Activated CD4-positive, alpha-beta memory T cell treated with anti-CD3 and anti-CD28 coated beads, Interleukin-2, amount 10 ng/mL, durations not matched to agents 7 days and 5 days (primary cell): ENCODE measurements at regions of chr12 and their contacts with region 1.

Region 1: GRCh38 chr12:54579696-54580333 is 8.6 kb downstream of the PPP1R1A start:
- DNase-seq: peak; percentile 83
- H3K4me3 Mint-ChIP-seq: no peak overlapping the region
- H3K27ac Mint-ChIP-seq: no peak overlapping the region
- H3K4me1 Mint-ChIP-seq: no peaks in the 10 kb centered on the region
- H3K27me3 Mint-ChIP-seq: peaks cover 12% of the 10 kb centered on the region

Region 2: DNA sequence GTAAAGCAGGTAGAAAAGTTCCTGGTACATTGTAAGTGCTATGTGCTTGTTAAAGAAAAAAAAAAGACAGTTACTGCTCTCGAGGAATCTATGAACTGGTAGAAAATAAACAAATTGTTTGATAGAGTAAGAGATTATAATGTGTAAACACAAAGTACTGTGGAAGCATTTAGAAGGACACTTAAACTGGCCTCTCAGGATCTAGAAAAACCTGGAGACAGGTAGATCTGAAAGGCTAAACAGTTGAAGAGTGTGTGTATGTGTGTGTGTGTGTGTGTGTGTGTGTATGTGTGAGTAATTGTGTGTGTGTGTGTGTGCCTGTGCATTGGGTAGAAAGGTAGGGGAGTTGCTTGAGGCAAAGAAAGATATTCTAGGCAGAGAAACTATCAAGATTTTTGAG is 67.3 kb before region 1 on chr12:
- CTCF ChIA-PET with region 1: no interaction called
- POLR2A ChIA-PET with region 1: no interaction called
- DNase-seq: no peak
- H3K4me3 Mint-ChIP-seq: no peak overlapping the region
- H3K27ac Mint-ChIP-seq: no peak overlapping the region
- H3K4me1 Mint-ChIP-seq: no peaks in the 10 kb centered on the region
- H3K27me3 Mint-ChIP-seq: no peaks in the 10 kb centered on the region

Region 3: GRCh38 chr12:54560374-54560858 is 19.4 kb before region 1 on chr12:
- CTCF ChIA-PET with region 1: interaction called, 12 read pairs
- POLR2A ChIA-PET with region 1: interaction called, 4 read pairs
- DNase-seq: peak; percentile 90
- H3K4me3 Mint-ChIP-seq: peak overlapping the region; percentile 73
- H3K27ac Mint-ChIP-seq: peak overlapping the region; percentile 67
- H3K4me1 Mint-ChIP-seq: peaks cover 32% of the 10 kb centered on the region
- H3K27me3 Mint-ChIP-seq: no peaks in the 10 kb centered on the region

Region 4: DNA sequence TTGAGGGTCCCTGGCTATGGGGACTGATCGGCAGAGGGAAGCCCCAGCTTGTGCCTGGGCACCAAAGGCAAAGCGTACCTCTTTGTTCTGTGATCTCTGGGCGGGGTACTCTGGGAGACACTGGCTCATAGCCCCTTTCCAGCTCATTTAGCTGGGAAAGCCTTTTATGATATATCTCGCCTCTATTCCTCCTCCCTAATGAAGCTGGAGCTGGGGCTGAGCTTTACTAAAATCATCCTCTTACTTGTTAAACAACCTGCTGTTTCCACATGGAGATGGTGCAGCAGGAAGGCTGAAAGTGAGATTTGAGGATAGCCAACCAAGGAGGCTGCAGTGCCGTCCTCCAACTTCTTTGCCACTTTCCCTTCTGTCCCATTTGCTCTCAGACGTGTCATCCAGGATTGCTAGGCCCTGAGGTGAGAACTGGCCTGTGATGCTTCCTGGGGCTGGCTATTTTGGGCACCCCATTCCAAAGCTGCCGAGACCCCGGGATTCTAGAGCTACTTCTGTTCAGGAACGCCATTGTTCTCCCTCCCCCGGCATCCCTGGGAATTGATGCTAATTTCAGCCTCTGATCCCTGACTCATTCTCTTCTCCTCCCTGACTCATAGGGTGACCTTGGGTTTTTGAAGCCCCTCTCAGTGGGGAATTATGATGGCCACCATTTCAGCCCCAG is 14.4 kb before region 1 on chr12:
- CTCF ChIA-PET with region 1: interaction called, 12 read pairs
- POLR2A ChIA-PET with region 1: interaction called, 3 read pairs
- DNase-seq: no peak
- H3K4me3 Mint-ChIP-seq: no peak overlapping the region
- H3K27ac Mint-ChIP-seq: no peak overlapping the region
- H3K4me1 Mint-ChIP-seq: peaks cover 19% of the 10 kb centered on the region
- H3K27me3 Mint-ChIP-seq: no peaks in the 10 kb centered on the region

Region 5: GRCh38 chr12:54596526-54596946 is 16.7 kb after region 1 on chr12:
- CTCF ChIA-PET with region 1: interaction called, 21 read pairs
- POLR2A ChIA-PET with region 1: no interaction called
- DNase-seq: peak; percentile 55
- H3K4me3 Mint-ChIP-seq: no peak overlapping the region
- H3K27ac Mint-ChIP-seq: no peak overlapping the region
- H3K4me1 Mint-ChIP-seq: no peaks in the 10 kb centered on the region
- H3K27me3 Mint-ChIP-seq: peaks cover 20% of the 10 kb centered on the region

Region 6: DNA sequence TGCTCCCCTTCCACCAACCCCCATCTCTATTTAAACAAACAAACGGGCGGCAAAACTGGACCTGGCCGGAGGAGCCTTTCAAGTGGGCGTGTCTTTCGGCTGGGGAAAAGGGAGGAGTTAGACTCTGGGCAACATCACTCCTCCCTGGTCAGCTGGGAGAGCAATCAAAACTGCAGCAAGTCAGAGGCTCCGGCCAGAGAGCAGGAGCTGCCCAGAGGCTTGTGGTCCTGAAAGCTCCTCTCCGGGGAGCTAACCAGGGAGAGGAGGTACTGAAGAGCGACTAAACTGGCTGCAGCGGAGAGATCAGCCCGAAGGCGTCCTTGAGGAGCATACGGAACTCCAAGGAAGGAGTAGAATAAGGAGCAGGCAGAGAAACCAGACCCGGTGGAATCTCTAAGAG is 440.0 kb after region 1 on chr12 and contains the start of gene NEUROD4:
- CTCF ChIA-PET with region 1: no interaction called
- POLR2A ChIA-PET with region 1: no interaction called
- DNase-seq: peak; percentile 17
- H3K4me3 Mint-ChIP-seq: no peak within 1 kb of the TSS
- H3K27ac Mint-ChIP-seq: no peak within 1 kb of the TSS
- H3K4me1 Mint-ChIP-seq: no peaks in the 10 kb centered on the region
- H3K27me3 Mint-ChIP-seq: peaks cover 42% of the 10 kb centered on the region
- total RNA-seq, gene NEUROD4: not detected